ENCODE measurements at regions of chr19 and their contacts with region 1.

Region 1: GRCh38 chr19:13150187-13150930 is at the starts of genes IER2 and STX10:
- DNase-seq: peak; percentile 88
- ATAC-seq: peak; percentile 45
- H3K4me3 Mint-ChIP-seq: peak within 1 kb of the TSS; percentile 99
- H3K27ac Mint-ChIP-seq: peak within 1 kb of the TSS; percentile 99
- H3K4me1 Mint-ChIP-seq: peaks cover 40% of the 10 kb centered on the region
- H3K27me3 Mint-ChIP-seq: no peaks in the 10 kb centered on the region
- CTCF ChIP-seq: no peak
- total RNA-seq, gene IER2: 116 and 119 TPM in 2 replicates
- total RNA-seq, gene STX10: 41.7 and 43.6 TPM in 2 replicates

Region 2: DNA sequence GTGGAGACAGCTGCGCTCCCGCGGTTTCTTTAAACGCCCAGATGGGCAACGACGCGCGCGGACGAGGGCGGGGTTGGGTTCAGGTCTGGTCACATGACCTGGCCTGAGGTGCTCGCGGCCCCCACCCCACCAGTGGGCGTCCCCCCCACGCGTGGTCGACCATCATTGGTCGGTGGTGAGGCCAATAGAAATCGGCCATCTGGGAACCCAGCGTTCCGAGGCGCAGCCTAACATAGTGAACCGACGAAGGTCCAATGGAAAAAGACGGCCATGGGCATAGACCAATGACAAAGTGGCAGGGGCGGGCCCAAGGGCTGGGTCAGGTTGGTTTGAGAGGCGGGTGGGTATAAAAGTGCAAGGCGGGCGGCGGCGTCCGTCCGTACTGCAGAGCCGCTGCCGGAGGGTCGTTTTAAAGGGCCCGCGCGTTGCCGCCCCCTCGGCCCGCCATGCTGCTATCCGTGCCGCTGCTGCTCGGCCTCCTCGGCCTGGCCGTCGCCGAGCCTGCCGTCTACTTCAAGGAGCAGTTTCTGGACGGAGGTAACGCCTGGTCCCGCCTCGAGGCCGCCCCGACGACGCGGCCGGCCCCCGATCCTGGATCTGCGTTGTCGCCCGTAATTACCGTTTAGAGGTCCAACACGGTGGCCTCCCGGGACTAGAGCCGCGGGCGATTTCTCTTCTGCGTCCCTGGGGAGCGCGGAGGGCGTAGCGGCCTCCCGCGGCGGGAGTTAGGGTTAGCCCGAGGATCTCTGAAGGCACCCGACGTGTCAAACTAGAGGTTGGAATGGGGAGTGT is 211.9 kb before region 1 on chr19 and contains the start of gene CALR:
- CTCF ChIA-PET with region 1: no interaction called
- POLR2A ChIA-PET with region 1: interaction called, 8 read pairs
- intact Hi-C with region 1: loop called (anchors 5 kb)
- DNase-seq: peak; percentile 96
- ATAC-seq: peak; percentile 85
- H3K4me3 Mint-ChIP-seq: peak within 1 kb of the TSS; percentile 99
- H3K27ac Mint-ChIP-seq: peak within 1 kb of the TSS; percentile 95
- H3K4me1 Mint-ChIP-seq: peaks cover 62% of the 10 kb centered on the region
- H3K27me3 Mint-ChIP-seq: no peaks in the 10 kb centered on the region
- CTCF ChIP-seq: no peak
- total RNA-seq, gene CALR: 721 and 802 TPM in 2 replicates

Region 3: GRCh38 chr19:13104360-13104847 is 46.0 kb before region 1 on chr19:
- CTCF ChIA-PET with region 1: interaction called, 6 read pairs
- POLR2A ChIA-PET with region 1: interaction called, 101 read pairs
- intact Hi-C with region 1: loop called (anchors 1 kb)
- DNase-seq: peak; percentile 86
- ATAC-seq: peak; percentile 56
- H3K4me3 Mint-ChIP-seq: peak overlapping the region; percentile 88
- H3K27ac Mint-ChIP-seq: peak overlapping the region; percentile 98
- H3K4me1 Mint-ChIP-seq: peaks cover 69% of the 10 kb centered on the region
- H3K27me3 Mint-ChIP-seq: no peaks in the 10 kb centered on the region
- CTCF ChIP-seq: peak; percentile 86

Region 4: DNA sequence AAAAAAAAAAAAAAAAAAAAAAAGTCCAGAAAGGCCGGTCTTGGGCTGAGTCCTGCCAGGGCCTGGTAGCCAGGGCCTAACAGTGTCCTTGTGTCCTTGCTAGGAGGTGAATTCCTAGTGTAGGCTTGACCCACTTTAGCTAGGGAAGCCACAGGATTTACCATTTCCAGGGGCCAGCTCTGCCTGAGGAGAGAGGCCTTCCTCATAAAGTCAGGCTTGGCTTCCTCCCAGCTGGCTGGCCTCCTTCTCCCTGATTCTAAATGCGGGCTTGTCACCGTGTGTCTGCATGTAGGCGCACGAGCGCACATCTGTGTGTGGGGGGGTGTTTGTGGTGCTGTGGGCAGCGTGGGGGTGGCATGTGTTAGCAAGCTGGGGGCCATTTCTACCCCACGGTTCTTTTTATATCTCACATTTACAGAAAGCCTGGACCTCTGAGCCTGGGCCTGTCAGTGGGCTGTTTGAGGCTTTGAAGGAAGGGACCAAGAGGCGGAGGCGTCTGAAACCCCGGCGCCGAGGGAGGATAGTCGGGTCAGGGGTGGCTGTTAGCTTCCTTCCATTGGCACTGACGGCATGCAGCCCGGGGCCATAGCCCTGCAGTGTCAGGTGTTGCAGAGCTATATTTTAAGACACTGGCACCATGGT is 31.5 kb after region 1 on chr19:
- CTCF ChIA-PET with region 1: interaction called, 9 read pairs
- POLR2A ChIA-PET with region 1: interaction called, 49 read pairs
- intact Hi-C with region 1: no loop called
- DNase-seq: no peak
- ATAC-seq: peak; percentile 66
- H3K4me3 Mint-ChIP-seq: peak overlapping the region; percentile 49
- H3K27ac Mint-ChIP-seq: peak overlapping the region; percentile 46
- H3K4me1 Mint-ChIP-seq: peaks cover 33% of the 10 kb centered on the region
- H3K27me3 Mint-ChIP-seq: no peaks in the 10 kb centered on the region
- CTCF ChIP-seq: no peak

Region 5: DNA sequence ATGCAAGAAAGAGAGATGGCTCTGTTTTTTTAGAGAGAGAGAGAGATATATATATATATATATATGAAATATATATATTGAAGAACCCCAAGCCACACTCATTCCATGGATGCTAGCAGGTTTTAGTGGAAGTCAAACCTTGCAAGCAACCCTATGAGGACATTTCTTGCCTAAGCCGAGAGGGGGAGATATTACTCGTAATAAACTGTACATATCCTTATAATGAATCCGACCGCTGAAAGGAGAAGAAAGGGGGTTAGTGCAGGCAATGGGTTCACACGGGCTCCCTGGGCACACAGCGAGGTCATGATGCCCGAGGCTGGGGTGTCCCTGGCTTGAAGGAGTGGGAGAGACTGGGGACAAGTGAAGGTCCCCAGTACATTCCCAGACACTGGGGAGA is 78.2 kb after region 1 on chr19:
- CTCF ChIA-PET with region 1: no interaction called
- POLR2A ChIA-PET with region 1: no interaction called
- intact Hi-C with region 1: no loop called
- DNase-seq: no peak
- ATAC-seq: no peak
- H3K4me3 Mint-ChIP-seq: no peak overlapping the region
- H3K27ac Mint-ChIP-seq: no peak overlapping the region
- H3K4me1 Mint-ChIP-seq: no peaks in the 10 kb centered on the region
- H3K27me3 Mint-ChIP-seq: peaks cover 25% of the 10 kb centered on the region
- CTCF ChIP-seq: no peak

Region 6: DNA sequence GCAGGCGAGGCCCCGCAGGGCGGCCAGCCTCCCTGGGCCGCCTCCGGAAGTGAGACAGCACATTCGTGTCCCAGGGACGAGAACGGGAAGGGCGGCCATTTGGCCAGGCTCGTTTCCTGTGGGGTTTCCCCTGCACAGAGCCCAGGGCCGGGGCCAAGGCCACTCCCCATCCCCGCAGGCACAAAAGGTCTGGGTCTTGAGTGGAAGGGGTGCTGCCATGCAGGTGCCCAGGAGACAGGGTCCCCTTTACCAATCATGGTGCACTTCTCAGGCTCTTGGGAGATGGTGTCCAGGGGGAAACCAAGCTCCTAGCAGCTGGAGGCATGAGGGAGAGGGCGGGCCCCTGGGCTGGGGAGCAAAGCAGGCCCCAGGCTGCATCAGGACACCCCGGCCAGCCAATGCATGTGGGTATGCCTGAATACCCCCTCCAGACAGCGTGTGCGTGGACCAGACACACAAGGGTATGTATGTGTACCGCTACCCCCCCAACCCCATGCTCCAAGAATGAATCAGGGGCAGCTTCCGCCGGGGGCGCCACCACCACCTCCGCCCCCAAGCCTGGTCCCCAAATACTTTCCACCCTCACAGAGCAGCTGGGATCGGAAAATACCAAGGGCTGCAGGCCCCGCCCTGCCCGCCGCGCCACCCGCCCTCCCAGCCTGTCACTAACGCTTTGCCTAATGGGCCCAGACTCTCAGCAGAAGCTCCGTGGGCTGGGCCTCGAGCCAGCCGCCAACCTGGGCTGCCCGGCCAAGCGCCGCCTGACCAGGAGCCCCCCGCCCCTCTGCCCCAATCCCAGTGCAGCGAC is 689.0 kb after region 1 on chr19:
- CTCF ChIA-PET with region 1: no interaction called
- POLR2A ChIA-PET with region 1: interaction called, 10 read pairs
- intact Hi-C with region 1: loop called (anchors 1 kb)
- DNase-seq: peak; percentile 70
- ATAC-seq: peak; percentile 45
- H3K4me3 Mint-ChIP-seq: peak overlapping the region; percentile 86
- H3K27ac Mint-ChIP-seq: peak overlapping the region; percentile 92
- H3K4me1 Mint-ChIP-seq: peaks cover 75% of the 10 kb centered on the region
- H3K27me3 Mint-ChIP-seq: no peaks in the 10 kb centered on the region
- CTCF ChIP-seq: no peak

Region 7: GRCh38 chr19:14136509-14137281 is 986.3 kb after region 1 on chr19 and contains the start of gene ASF1B:
- CTCF ChIA-PET with region 1: no interaction called
- POLR2A ChIA-PET with region 1: no interaction called
- intact Hi-C with region 1: loop called (anchors 5 kb)
- DNase-seq: peak; percentile 94
- ATAC-seq: peak; percentile 80
- H3K4me3 Mint-ChIP-seq: peak within 1 kb of the TSS; percentile 94
- H3K27ac Mint-ChIP-seq: peak within 1 kb of the TSS; percentile 94
- H3K4me1 Mint-ChIP-seq: peaks cover 16% of the 10 kb centered on the region
- H3K27me3 Mint-ChIP-seq: no peaks in the 10 kb centered on the region
- CTCF ChIP-seq: no peak
- total RNA-seq, gene ASF1B: 3.4 and 3.7 TPM in 2 replicates

Measured in activated B cell treated with CpG ODN at 0.5 μM for 24 hours (primary cell).